Lower leg skin (tissue), 4 donors: ENCODE measurements at regions of chr9 and their contacts with region 1.

Region 1: GRCh38 chr9:3880851-3881250 is 355.1 kb upstream of the RFX3 start:
- DNase-seq: no peak
- H3K4me3 ChIP-seq: no peak overlapping the region
- CTCF ChIP-seq: no peak
- POLR2A ChIP-seq: no peak

Region 2: DNA sequence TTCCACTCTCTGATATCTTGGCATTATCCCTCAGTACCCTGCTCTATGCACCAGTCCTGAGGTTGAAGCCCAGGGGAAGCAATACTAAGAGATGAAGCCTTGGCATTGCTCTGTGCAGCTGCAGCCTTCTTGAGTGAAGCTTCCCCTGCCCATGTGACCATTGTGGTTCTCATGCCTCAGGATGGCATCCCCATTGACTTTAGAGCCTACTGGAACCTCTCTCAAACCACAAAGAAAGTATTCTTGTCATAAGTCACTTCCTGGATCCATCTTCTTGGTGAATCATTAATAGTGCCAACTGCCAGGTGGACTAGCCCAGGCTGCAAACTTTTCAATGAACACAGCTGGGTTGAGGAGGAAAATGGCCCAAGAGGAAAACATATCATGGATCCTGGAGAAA is 71.1 kb before region 1 on chr9:
- intact Hi-C with region 1: no loop called
- DNase-seq: no peak
- H3K4me3 ChIP-seq: no peak overlapping the region
- CTCF ChIP-seq: no peak
- POLR2A ChIP-seq: no peak

Region 3: DNA sequence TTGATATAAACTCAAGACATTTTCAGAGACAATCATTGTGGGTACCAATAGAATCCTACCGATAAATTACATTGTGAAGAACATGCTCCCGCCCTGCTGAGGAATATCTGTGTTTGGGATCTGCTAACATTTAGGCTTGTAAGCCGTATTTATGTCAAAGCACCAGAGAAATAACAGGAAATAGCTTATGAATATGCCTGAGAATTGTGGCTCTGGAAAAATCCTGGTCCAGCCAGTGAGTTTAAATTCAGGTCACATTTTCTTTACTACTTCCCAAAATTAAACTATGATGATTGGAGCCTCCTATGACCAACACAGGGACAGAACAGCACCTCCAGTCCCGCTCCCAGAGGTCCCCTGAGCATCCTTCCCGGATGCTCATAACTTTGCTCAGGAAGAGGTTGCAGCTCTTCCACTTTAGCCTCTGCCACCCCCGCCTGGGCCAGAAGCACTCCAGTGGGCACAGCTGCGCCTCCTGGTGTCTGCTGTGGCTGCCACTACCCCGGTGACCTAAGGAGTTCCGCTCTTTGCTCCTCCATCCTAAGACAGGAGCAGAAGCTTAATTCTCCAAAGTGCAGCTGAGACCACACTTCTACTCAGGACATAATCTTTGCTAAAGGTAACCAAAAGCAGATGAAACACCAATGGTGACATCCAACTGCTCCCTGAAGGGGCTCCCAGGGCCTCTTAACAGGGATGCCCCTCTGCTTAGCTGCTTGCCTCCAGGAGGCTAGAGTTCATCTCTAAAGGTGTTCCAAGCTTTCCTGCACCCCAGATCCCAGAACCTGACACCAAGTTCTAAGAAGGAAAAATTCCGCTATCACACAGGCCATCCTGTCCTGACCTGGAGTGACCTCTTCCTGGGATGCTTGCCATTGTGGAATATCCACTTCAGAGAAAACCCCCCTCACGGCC is 668.2 kb after region 1 on chr9:
- intact Hi-C with region 1: no loop called
- DNase-seq: no peak
- H3K4me3 ChIP-seq: no peak overlapping the region
- CTCF ChIP-seq: no peak
- POLR2A ChIP-seq: no peak

Region 4: DNA sequence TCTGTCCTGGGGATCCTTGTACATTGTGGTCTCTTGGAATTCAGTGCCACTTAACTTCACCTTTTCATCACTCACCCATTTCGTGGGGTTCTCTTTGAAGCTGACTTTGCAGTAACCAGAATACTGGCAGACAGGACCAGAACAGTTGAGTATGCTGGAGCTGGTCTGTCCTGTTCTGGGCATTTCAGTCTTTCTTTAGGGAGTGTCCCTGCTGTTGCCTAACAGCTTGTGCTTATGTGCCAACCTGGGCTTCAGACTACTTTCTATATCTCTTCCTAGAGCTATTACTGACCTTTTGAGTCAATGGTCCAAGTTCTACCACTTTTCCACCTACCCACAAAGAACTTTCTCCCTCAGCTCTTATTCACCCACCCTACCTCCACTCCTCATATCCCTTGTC is 1314.6 kb after region 1 on chr9:
- intact Hi-C with region 1: loop called (anchors 5 kb)
- DNase-seq: no peak
- H3K4me3 ChIP-seq: no peak overlapping the region
- CTCF ChIP-seq: no peak
- POLR2A ChIP-seq: no peak